Posterior cingulate gyrus (tissue), 11 donors: ENCODE measurements at regions of chr16 and their contacts with region 1.

Region 1: GRCh38 chr16:69396187-69397061 is 10.6 kb upstream of the TERF2 start:
- DNase-seq: peak in 5 of 10 donors; percentile 38 to 72 (median 70)

Region 2: GRCh38 chr16:69465083-69465721 is 68.8 kb after region 1 on chr16:
- intact Hi-C with region 1: no loop called
- DNase-seq: peak in 1 of 10 donors; percentile 27

Region 3: DNA sequence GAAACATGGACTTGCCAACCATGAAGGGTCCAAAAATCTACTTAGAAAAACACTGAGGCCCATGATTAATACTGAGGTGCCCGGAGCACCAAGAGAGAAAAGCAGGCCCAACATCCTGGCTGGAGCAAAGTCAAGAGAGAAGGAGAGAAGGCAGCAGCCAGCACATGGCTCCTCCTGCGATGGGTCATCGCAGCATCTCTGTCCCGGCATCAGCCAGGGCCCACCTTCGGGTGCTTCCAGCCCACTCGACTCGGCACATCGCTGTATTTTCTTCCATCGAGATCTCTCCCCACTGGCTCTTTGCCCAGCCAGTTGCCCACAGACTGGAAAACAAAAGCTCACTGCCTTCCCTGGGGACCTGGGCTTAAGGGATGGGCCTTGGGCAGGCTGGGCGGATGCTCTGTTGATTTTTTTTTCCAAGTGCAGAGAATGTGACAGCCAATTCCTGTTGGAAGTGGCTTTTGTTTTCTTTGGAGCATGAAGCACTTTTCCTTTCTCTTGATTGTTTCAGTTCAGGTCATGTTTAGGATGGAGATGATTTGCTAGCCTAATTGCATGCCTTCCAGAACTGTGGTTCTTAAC is 86.1 kb after region 1 on chr16:
- intact Hi-C with region 1: loop called (anchors 2 kb)
- DNase-seq: peak in 2 of 10 donors; percentile 23 to 26

Region 4: GRCh38 chr16:69565671-69566239 is 169.3 kb after region 1 on chr16 and contains the start of gene NFAT5:
- intact Hi-C with region 1: loop called (anchors 5 kb)
- DNase-seq: peak; percentile 86 to 98 (median 90)

Region 5: GRCh38 chr16:69709456-69710084 is 313.1 kb after region 1 on chr16:
- intact Hi-C with region 1: loop called (anchors 2 kb)
- DNase-seq: no peak

Region 6: DNA sequence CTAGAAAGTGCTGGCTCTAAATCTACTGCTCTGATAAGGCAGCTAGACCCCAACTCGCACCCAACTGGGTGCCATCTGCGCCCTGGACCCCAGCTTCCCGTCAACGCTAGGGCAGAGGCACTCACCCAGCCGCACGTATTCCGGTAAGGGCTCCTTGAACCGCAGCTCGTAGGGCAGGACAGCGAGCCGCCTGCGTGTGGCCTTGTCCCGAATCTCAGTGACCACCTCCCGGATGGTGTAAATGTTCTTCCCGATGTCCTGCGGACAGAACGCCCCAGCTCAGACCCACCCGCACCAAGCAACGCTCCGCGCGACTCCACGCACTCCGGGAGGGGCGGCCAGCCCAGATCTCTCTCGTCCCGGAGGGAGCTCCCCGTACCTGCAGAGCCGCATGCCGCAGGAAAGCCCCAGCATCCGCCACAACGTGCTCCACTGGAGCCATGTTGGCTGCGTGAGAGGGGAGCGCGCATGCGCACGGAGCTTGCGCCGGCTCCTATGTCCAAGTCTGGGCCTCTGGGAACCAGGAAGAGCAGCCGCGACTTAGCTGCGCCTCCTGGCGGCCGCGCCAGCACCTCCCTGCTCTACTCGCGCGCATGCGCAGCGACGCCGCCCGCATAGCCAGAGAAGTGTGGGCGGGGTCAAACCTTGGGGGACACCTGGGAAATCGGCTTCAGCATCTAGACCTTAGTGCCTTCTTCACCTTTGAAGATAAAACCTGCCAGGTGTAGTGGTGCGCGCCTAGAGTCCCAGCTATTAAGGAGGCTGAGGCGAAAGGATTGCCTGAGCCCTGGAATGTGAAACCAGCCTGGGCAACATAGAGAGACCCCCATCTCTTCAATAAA is 358.3 kb after region 1 on chr16 and contains the start of gene NOB1:
- intact Hi-C with region 1: loop called (anchors 2 kb)
- DNase-seq: peak; percentile 93 to 100 (median 96)